ENCODE measurements at regions of chr18 and their contacts with region 1.

Region 1: GRCh38 chr18:9249254-9249653 is 85.3 kb upstream of the TWSG1 start:
- DNase-seq: no peak
- ATAC-seq: no peak
- H3K4me3 ChIP-seq: no peak overlapping the region
- H3K27ac ChIP-seq: no peak overlapping the region
- H3K4me1 ChIP-seq: no peaks in the 10 kb centered on the region
- H3K27me3 ChIP-seq: no peaks in the 10 kb centered on the region
- CTCF ChIP-seq: no peak
- POLR2A ChIP-seq: no peak
- RAD21 ChIP-seq: no peak

Region 2: DNA sequence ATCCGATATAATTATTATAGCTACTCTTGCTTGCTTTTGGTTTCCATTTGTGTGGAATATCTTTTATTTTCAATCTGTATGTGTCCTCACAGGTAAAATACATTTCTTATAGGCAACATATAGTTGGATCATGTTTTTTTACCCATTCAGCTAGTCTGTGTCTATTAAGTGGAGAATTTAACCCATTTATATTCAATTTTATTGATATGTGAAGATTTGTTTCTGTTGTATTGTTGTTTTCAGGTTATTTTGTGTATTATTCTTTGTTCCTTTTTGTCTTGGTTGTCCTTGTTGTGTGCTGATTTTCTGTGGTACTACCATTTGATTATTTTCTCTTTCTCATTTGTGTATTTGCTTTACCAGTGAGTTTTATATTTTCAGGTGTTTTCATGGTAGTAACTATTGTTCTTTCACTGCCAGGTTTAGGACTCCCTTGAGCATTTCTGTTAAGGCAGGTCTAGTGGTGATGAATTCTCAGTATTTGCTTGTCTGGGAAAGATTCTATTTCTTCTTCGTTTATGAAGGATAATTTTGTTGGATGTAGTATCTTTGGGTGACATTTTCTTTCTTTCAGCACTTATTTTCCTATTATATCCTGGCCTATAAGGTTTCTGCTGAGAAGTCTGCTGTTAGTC is 17.3 kb before region 1 on chr18:
- CTCF ChIA-PET with region 1: no interaction called
- POLR2A ChIA-PET with region 1: no interaction called
- RAD21 ChIA-PET with region 1: no interaction called
- intact Hi-C with region 1: loop called (anchors 1 kb)
- DNase-seq: no peak
- ATAC-seq: no peak
- H3K4me3 ChIP-seq: no peak overlapping the region
- H3K27ac ChIP-seq: no peak overlapping the region
- H3K4me1 ChIP-seq: no peaks in the 10 kb centered on the region
- H3K27me3 ChIP-seq: no peaks in the 10 kb centered on the region
- CTCF ChIP-seq: no peak
- POLR2A ChIP-seq: no peak
- RAD21 ChIP-seq: no peak

Measured in HCT116 (cell line).